ENCODE measurements at regions of chr1 and their contacts with region 1.

Region 1: GRCh38 chr1:154669464-154670282 is 61.7 kb upstream of the ADAR start:
- DNase-seq: peak; percentile 85 to 88
- ATAC-seq: peak; percentile 100
- H3K4me3 ChIP-seq: no peak overlapping the region
- H3K27ac ChIP-seq: no peak overlapping the region
- H3K4me1 ChIP-seq: no peaks in the 10 kb centered on the region
- CTCF ChIP-seq: peak; percentile 87
- EP300 ChIP-seq: no peak
- POLR2A ChIP-seq: no peak
- RAD21 ChIP-seq: peak; percentile 94 to 97

Region 2: GRCh38 chr1:154488922-154489321 is 180.8 kb before region 1 on chr1:
- CTCF ChIA-PET with region 1: no interaction called
- POLR2A ChIA-PET with region 1: no interaction called
- DNase-seq: no peak
- ATAC-seq: no peak
- H3K4me3 ChIP-seq: no peak overlapping the region
- H3K27ac ChIP-seq: no peak overlapping the region
- H3K4me1 ChIP-seq: peaks cover 10% of the 10 kb centered on the region; the same call in 2 of the 3 replicates
- CTCF ChIP-seq: no peak
- EP300 ChIP-seq: no peak
- POLR2A ChIP-seq: no peak
- RAD21 ChIP-seq: no peak

Region 3: DNA sequence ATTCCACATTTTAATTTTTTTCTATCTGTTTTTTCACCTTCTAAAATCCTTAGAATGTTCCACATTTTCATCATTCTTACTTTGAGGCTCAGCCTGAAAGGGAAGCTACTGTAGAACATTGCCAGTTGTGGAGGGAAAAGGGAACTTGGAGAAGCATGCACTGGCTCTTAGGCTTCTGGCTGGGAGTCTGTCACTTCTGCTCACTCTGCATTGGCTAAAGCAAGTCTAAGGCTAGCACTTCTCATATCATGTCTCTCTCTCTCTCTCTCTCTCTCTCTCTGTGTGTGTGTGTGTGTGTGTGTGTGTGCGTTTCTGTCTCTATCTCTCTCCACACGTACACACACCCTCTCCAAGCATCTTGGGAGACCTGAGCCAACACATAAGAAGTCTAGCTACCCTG is 12.1 kb before region 1 on chr1:
- CTCF ChIA-PET with region 1: interaction called, 14 read pairs
- POLR2A ChIA-PET with region 1: no interaction called
- DNase-seq: no peak
- ATAC-seq: no peak; a peak in 1 of 6 replicates
- H3K4me3 ChIP-seq: no peak overlapping the region
- H3K27ac ChIP-seq: no peak overlapping the region
- H3K4me1 ChIP-seq: no peaks in the 10 kb centered on the region
- CTCF ChIP-seq: no peak
- EP300 ChIP-seq: no peak
- POLR2A ChIP-seq: no peak
- RAD21 ChIP-seq: no peak

Region 4: DNA sequence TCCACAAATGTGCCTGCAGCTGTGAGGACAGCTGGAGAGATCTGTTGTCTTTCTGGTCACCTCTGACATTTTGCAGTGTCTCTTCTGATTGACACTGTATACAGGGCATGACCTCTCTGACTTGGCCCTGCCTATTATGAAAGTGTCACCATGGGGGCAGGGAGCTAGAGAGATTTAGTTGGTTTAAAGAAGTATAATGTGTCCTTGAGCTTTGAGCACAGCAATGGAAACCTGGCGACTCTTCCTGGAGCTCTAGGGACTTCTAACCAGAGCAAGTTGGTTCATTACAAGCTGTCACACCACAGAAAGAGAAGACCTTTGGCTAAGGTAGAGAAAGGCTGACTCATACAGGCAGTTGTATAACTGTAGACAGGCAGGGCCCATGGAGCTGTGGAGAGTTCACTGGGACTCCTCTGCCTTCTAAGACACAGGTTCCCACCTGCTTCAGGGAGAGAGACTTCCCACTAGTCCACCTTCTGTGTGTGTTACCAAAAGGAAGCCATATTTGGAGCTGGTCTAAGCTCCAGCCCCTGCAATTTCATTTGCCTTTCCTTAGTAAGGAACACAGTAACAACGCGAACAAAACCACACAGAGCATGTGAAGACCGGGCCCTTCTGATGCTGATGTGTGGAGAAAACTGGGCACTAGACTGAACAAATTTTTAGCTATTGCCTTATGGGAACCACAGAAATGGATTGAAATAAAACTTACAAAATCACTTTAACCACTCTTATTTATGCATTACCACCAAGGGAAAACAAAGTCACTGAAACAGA is 28.8 kb after region 1 on chr1:
- CTCF ChIA-PET with region 1: interaction called, 15 read pairs
- POLR2A ChIA-PET with region 1: no interaction called
- DNase-seq: no peak
- ATAC-seq: peak in 1 of 2 experiments; percentile 40; a peak in 3 of 6 replicates
- H3K4me3 ChIP-seq: no peak overlapping the region
- H3K27ac ChIP-seq: no peak overlapping the region
- H3K4me1 ChIP-seq: peaks cover 14% of the 10 kb centered on the region
- CTCF ChIP-seq: no peak
- EP300 ChIP-seq: no peak
- POLR2A ChIP-seq: no peak
- RAD21 ChIP-seq: no peak

Region 5: DNA sequence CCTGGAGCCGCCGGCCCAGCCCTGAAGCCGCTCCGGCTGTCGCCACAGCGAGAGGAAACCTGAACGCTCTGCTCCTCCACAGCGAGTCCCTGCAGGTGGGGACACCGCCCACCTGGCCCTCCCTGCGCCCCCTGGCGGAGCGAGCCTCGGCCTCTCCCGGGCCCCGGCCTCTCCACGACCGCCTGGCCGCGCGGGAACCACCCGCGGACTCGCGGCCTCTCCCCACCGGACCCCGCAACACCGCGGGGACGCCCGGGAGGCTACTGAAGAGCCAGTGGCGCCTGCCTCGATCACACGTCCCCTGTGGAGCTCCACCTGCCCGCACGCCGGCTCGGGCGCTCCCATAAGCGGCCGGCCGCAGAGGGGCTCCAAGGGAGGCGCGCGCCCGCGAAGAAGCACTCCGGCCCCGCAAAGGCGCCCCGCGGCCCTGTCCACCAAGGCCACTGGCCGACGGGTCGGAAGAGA is 90.8 kb after region 1 on chr1:
- CTCF ChIA-PET with region 1: interaction called, 78 read pairs
- POLR2A ChIA-PET with region 1: no interaction called
- DNase-seq: peak; percentile 44 to 72
- ATAC-seq: peak; percentile 86 to 97
- H3K4me3 ChIP-seq: peak overlapping the region; percentile 41
- H3K27ac ChIP-seq: peak overlapping the region; percentile 21 to 84; a peak in 5 of 6 replicates
- H3K4me1 ChIP-seq: 0 out of 3 replicates have a peak, but pooled peaks cover 5% of the 10 kb centered on the region
- CTCF ChIP-seq: peak; percentile 76
- EP300 ChIP-seq: no peak
- POLR2A ChIP-seq: no peak
- RAD21 ChIP-seq: peak; percentile 43 to 57; a peak in 4 of 5 replicates

Region 6: DNA sequence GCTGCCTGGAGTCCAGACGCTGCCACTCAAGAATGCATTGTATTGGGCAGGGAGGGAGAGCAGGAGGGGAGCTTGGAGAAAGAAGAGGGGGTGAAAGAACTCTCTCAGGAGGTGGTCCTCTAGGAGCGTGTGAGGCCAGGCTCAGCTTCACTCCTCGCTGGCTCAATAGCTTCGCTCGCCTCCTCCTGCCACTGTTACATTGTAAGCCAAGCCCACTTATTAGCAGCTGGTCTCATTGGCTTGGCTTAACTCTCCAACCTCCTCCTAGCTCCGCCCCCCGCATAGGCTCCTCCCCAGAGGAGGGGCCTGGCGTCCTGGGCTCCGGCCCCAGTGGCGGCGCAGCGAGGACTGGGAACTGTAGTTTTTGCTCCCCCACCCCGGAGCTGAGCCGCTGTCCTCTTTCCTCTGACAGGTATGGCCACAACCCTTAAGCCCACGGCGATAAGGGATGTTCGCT is 200.5 kb after region 1 on chr1 and contains the start of gene KCNN3:
- CTCF ChIA-PET with region 1: interaction called, 25 read pairs
- POLR2A ChIA-PET with region 1: no interaction called
- DNase-seq: peak; percentile 88 to 96
- ATAC-seq: peak; percentile 93 to 99
- H3K4me3 ChIP-seq: peak within 1 kb of the TSS; percentile 32
- H3K27ac ChIP-seq: 0 out of 6 replicates have a peak within 1 kb of the TSS, but pooled peaks of 1 of the 2 experiments have one; percentile 10
- H3K4me1 ChIP-seq: 0 out of 3 replicates have a peak, but pooled peaks cover 3% of the 10 kb centered on the region
- CTCF ChIP-seq: no peak
- EP300 ChIP-seq: no peak
- POLR2A ChIP-seq: no peak
- RAD21 ChIP-seq: no peak
- polyA plus RNA-seq, gene KCNN3: 0.03 and 0.08 TPM in 2 replicates

Region 7: DNA sequence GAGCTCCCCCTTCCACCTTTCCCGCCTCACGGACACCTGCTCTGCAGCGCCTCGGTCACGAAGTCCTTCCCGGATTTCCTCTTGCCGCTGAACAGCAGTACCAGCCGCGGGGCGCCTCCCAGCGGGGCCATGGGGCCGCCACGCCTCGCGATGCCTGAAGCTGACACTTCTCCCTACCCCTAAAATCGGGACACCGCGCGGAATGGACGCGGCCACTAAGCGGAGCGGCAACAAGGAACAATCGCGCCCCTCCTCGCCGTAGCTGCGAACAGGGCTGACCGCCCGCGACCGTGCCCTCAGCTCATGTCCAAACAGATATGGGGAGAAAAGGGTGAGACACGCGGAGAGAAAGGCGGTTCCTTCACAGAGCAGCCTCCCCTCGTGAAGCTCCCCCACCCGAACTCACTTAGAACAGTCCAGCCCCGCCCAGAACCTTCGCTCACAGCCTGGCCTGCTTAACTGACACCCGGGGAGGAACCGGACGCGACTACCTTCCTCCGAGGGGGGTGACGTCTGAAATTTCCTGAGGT is 266.9 kb after region 1 on chr1 and contains the start of gene PMVK:
- CTCF ChIA-PET with region 1: interaction called, 13 read pairs
- POLR2A ChIA-PET with region 1: no interaction called
- DNase-seq: peak; percentile 97
- ATAC-seq: peak; percentile 86 to 91
- H3K4me3 ChIP-seq: peak within 1 kb of the TSS; percentile 61
- H3K27ac ChIP-seq: peak within 1 kb of the TSS; percentile 97 to 98
- H3K4me1 ChIP-seq: peaks cover 25% of the 10 kb centered on the region
- CTCF ChIP-seq: peak; percentile 39; the same call in 2 of the 3 replicates
- EP300 ChIP-seq: no peak
- POLR2A ChIP-seq: peak; percentile 80
- RAD21 ChIP-seq: peak in 1 of 2 experiments; percentile 32; a peak in 3 of 5 replicates
- polyA plus RNA-seq, gene PMVK: 31.4 and 35.7 TPM in 2 replicates

Measured in A549 (cell line).